MCF 10A (cell line): ENCODE measurements at regions of chr14 and their contacts with region 1.

Region 1: GRCh38 chr14:69611201-69612011 is at the start of gene SUSD6:
- DNase-seq: peak; percentile 90
- H3K4me3 Mint-ChIP-seq: peak within 1 kb of the TSS; percentile 91
- H3K27ac Mint-ChIP-seq: peak within 1 kb of the TSS; percentile 93
- H3K4me1 Mint-ChIP-seq: peaks cover 53% of the 10 kb centered on the region
- H3K27me3 Mint-ChIP-seq: no peaks in the 10 kb centered on the region
- CTCF ChIP-seq: no peak
- total RNA-seq, gene SUSD6: 27.7 and 32.1 TPM in 2 replicates

Region 2: GRCh38 chr14:69408331-69408960 is 203.0 kb before region 1 on chr14:
- CTCF ChIA-PET with region 1: no interaction called
- POLR2A ChIA-PET with region 1: no interaction called
- intact Hi-C with region 1: no loop called
- DNase-seq: no peak
- H3K4me3 Mint-ChIP-seq: no peak overlapping the region
- H3K27ac Mint-ChIP-seq: no peak overlapping the region
- H3K4me1 Mint-ChIP-seq: peaks cover 6% of the 10 kb centered on the region
- H3K27me3 Mint-ChIP-seq: no peaks in the 10 kb centered on the region
- CTCF ChIP-seq: no peak

Region 3: GRCh38 chr14:69643443-69644164 is 32.2 kb after region 1 on chr14:
- CTCF ChIA-PET with region 1: interaction called, 10 read pairs
- POLR2A ChIA-PET with region 1: interaction called, 27 read pairs
- intact Hi-C with region 1: no loop called
- DNase-seq: peak; percentile 96
- H3K4me3 Mint-ChIP-seq: no peak overlapping the region
- H3K27ac Mint-ChIP-seq: peak overlapping the region; percentile 76
- H3K4me1 Mint-ChIP-seq: peaks cover 50% of the 10 kb centered on the region
- H3K27me3 Mint-ChIP-seq: no peaks in the 10 kb centered on the region
- CTCF ChIP-seq: no peak

Region 4: DNA sequence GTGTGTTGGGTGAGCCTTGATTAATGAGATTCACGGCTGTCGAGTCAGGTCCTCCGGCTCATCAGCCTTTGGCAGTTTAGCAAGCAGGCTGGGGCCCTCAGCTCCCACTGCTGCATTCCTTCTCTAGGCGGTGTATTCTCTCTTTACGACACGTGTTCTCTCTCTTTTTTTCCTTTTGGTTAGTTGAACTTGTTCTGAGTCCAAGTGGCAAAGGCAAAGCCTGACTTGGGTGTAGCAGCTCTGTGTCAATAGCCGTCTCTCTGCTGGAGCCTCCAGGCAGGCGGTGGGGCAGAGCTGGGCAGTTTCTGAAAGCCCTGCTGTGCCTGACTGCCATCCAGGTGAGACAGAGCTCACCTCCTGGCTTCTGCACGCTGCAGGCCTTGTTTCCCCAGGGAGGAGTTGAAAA is 46.5 kb after region 1 on chr14:
- CTCF ChIA-PET with region 1: interaction called, 3 read pairs
- POLR2A ChIA-PET with region 1: interaction called, 36 read pairs
- intact Hi-C with region 1: no loop called
- DNase-seq: peak; percentile 71
- H3K4me3 Mint-ChIP-seq: peak overlapping the region; percentile 69
- H3K27ac Mint-ChIP-seq: peak overlapping the region; percentile 98
- H3K4me1 Mint-ChIP-seq: peaks cover 51% of the 10 kb centered on the region
- H3K27me3 Mint-ChIP-seq: no peaks in the 10 kb centered on the region
- CTCF ChIP-seq: no peak

Region 5: DNA sequence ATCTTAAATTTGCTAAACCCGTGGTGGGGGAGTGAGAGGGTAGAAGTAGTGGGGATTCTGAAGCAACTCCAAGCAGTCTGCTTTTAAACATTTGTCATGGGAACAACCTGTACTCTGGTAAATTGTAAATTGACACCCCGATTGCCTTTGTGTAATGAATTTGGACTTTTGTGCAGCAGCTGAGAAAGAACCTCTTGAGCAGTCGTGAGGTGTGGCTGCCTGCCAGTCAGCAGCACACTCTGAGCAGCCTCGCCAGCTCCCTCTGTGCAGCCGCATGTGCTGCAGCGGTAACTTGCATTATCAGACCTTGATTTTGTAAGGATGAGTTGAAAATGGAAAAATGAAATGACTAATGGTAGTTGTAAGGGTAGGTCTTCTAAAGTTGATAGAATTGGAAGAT is 74.3 kb after region 1 on chr14:
- CTCF ChIA-PET with region 1: no interaction called
- POLR2A ChIA-PET with region 1: interaction called, 63 read pairs
- intact Hi-C with region 1: no loop called
- DNase-seq: peak; percentile 82
- H3K4me3 Mint-ChIP-seq: peak overlapping the region; percentile 48
- H3K27ac Mint-ChIP-seq: peak overlapping the region; percentile 84
- H3K4me1 Mint-ChIP-seq: peaks cover 47% of the 10 kb centered on the region
- H3K27me3 Mint-ChIP-seq: no peaks in the 10 kb centered on the region
- CTCF ChIP-seq: no peak

Region 6: DNA sequence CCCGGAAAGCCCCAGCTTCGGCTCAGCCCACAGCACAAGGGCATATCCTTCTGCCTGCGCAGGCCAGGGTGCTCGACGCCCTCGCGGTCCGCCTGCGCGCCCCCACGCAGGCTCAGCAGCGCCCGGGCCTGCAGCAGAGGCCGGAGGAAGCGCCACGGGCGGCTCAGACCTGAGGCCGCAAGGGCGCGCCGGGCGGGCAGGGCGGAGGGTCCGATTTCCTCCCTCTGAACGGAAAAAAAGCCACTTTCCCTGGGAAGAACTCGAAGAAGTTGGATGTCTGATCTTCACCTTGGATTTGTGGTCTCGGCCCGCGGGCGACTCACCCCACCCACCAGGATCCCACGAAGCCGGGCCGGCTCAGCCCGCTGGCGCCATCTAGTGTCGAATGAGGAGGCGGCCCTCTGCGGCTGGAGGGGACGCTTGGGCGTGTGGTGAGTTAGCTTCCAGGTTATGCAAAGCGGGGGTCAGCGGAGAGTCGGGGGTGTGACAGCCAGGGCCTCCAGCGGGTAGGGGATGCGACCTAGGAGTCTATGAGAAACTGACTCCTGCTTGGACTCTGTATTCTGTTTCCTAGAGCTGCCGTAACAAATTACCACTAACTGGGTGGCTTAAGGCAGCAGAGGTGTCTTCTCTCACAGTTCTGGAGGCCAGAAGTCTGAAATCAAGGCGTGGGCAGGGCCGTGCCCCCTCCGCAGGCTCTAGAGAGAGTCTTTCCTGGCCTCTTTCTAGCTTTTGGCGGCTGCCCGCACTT is 115.5 kb after region 1 on chr14:
- CTCF ChIA-PET with region 1: interaction called, 28 read pairs
- POLR2A ChIA-PET with region 1: interaction called, 5 read pairs
- intact Hi-C with region 1: no loop called
- DNase-seq: peak; percentile 79
- H3K4me3 Mint-ChIP-seq: peak overlapping the region; percentile 59
- H3K27ac Mint-ChIP-seq: no peak overlapping the region
- H3K4me1 Mint-ChIP-seq: peaks cover 6% of the 10 kb centered on the region
- H3K27me3 Mint-ChIP-seq: no peaks in the 10 kb centered on the region
- CTCF ChIP-seq: peak; percentile 94

Region 7: DNA sequence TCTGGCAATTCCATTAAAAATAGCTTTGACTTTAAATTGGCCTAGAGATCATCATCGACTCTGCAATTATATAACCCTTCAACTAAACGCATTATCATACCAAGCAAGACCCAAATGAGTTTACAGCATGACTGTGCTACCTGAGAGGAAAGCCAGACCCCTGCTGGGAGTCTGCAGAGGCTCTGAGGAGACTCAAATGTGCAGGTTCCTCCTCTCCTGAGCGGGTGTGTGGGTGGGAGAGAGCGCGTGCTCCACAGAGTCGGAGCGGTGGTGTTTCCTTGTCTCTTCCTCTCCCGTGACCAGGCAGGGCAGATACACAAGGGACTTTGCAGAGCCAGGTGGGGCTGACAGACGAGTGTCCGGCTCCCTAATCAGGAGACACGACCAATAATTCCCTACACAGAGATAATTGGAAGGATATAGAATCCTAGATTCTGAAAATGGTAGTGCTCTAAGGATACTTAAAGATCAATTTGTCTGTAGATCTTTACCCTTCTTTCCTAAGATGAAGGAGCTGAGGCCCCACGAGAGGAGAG is 503.3 kb after region 1 on chr14:
- CTCF ChIA-PET with region 1: no interaction called
- POLR2A ChIA-PET with region 1: no interaction called
- intact Hi-C with region 1: no loop called
- DNase-seq: no peak
- H3K4me3 Mint-ChIP-seq: no peak overlapping the region
- H3K27ac Mint-ChIP-seq: no peak overlapping the region
- H3K4me1 Mint-ChIP-seq: no peaks in the 10 kb centered on the region
- H3K27me3 Mint-ChIP-seq: peaks cover 55% of the 10 kb centered on the region
- CTCF ChIP-seq: no peak